ENCODE measurements at regions of chr11 and their contacts with region 1.

Region 1: DNA sequence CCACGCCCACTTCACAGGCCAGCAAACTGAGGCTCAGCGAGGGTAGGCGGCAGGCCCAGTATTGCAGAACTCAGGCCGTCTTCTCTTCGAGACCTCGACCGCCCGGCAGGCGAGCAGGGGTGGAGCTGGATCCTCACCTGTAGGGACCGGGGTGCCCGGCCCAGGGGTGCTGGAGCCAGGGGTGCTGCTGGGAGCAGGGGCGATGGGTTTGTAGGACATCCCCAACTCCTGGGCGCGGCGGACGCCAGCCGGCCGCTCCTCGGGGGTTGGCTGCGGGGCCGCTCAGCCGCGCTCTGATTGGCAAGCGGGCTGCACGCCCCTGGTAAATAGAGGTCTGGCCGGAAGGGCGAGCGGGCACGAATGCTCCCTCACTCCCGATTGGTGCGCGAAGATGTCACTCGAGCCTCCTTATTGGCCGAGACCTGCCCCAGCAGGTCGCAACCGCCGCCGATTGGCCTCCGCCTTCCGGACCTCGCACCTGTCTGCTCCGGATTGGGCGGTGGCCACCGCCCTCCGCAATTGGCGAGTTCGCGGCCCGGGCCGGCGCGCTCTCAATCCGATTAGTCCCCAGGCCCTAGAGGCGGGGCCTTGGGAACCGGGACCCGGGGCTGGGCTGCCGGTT is at the start of gene CDK2AP2:
- DNase-seq: peak; percentile 99
- H3K4me3 ChIP-seq: peak within 1 kb of the TSS; percentile 49 to 83 (median 69)
- H3K4me3 Mint-ChIP-seq: peak within 1 kb of the TSS; percentile 78 to 87
- H3K27ac ChIP-seq: peak within 1 kb of the TSS; percentile 82 to 93
- H3K27ac Mint-ChIP-seq: peak within 1 kb of the TSS; percentile 88 to 98 (median 95)
- H3K4me1 ChIP-seq: peaks cover 46 to 53% of the 10 kb centered on the region in 2 donors
- H3K4me1 Mint-ChIP-seq: peaks cover 30% of the 10 kb centered on the region
- H3K27me3 ChIP-seq: peaks cover 0 to 13% of the 10 kb centered on the region in 2 donors
- H3K27me3 Mint-ChIP-seq: peaks cover 5 to 17% (median 11%) of the 10 kb centered on the region in 3 donors
- CTCF ChIP-seq: no peak
- polyA plus RNA-seq, gene CDK2AP2: 47.8 to 80.2 (median 78.5) TPM

Region 2: DNA sequence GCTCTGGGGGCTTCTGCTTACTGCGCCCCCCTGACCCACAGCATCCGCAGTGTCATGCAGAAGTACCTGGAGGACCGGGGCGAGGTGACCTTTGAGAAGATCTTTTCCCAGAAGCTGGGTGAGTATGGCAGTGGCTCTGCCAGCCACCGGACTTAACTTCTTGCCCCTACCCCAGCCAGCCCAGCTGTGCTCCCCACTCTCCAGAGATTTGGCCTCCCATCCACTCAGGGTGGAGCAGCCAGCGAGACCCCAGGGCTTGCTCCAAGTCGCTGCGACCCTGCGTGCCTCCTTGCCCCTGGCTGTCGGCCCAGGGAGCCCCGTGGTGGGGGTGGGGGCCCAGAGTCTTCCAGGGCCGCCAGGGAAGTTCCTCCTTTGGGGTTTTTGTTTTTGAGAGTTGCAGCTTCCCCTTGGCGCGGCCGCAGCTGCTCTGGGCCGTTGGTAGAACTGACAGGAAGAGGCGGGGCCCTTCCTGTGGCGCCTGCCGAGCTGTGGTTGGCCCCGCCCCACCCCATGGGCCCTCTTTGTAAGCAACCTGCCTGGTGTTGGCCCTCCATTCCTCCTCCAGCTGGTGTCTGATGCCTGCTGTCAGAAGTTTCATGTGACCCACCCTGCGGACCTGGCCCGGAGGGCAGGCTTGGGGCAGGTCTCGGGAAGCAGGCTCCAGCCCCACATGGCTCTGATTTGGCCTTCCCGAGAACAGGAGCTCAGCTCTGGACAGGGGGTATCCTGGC is 230.6 kb before region 1 on chr11:
- intact Hi-C with region 1: loop called in 1 of 2 experiments (anchors 10 kb)
- DNase-seq: peak; percentile 96 to 98 (median 96)
- H3K4me3 ChIP-seq: peak overlapping the region; percentile 3 to 97 (median 23)
- H3K4me3 Mint-ChIP-seq: peak overlapping the region; percentile 73 to 84
- H3K27ac ChIP-seq: peak overlapping the region; percentile 92 to 99
- H3K27ac Mint-ChIP-seq: peak overlapping the region; percentile 93 to 98 (median 97)
- H3K4me1 ChIP-seq: peaks cover 100% of the 10 kb centered on the region in 2 donors
- H3K4me1 Mint-ChIP-seq: peaks cover 98% of the 10 kb centered on the region
- H3K27me3 ChIP-seq: no peaks in the 10 kb centered on the region
- H3K27me3 Mint-ChIP-seq: peaks cover 0 to 6% (median 4%) of the 10 kb centered on the region in 3 donors
- CTCF ChIP-seq: no peak

Region 3: DNA sequence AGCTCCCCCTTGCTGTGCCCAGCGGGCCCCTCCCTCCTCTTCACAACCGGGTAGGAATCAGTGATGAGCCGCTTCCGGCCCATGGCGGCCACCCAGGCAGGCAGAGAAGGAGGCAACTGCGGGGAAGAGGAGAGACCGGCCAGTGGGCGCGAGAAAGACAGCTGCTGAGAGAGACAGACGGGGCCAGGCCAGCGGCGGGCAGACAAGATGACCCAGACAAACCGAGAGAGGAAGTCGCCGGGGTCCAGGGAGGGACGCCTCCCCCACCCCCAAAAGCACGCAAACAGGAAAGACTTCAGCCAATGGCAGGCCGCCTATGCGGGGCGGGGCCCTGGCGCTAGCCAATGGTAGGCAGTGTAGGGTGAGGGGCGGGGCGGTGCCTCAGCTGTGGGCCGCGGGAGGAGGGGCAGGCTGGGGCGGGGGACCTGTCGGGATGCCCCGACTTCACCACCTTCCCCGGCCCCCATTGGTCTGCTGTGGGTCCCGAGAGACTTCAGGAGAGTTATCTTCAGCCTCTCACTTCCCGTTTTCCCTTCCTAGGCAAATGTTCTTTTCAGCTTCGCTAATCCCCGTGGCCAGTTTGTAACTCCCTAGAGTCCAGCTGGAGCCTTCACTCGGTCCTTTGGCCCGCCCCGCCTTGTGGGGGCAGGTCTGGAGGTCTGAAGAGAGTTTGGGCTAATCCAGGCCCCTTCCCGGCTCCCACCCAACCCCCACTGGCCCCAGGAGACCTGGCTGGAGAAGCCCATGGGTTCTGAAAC is 154.5 kb before region 1 on chr11 and contains the start of gene POLD4:
- intact Hi-C with region 1: loop called (anchors 2 to 5 kb)
- DNase-seq: peak; percentile 97 to 99 (median 99)
- H3K4me3 ChIP-seq: peak within 1 kb of the TSS; percentile 52 to 85 (median 73)
- H3K4me3 Mint-ChIP-seq: peak within 1 kb of the TSS; percentile 87 to 96
- H3K27ac ChIP-seq: peak within 1 kb of the TSS; percentile 96 to 99
- H3K27ac Mint-ChIP-seq: peak within 1 kb of the TSS; percentile 97 to 100 (median 99)
- H3K4me1 ChIP-seq: peaks cover 73 to 76% of the 10 kb centered on the region in 2 donors
- H3K4me1 Mint-ChIP-seq: peaks cover 71% of the 10 kb centered on the region
- H3K27me3 ChIP-seq: no peaks in the 10 kb centered on the region
- H3K27me3 Mint-ChIP-seq: peaks cover 0 to 3% (median 2%) of the 10 kb centered on the region in 3 donors
- CTCF ChIP-seq: no peak
- polyA plus RNA-seq, gene POLD4: 157 to 205 (median 176) TPM

Region 4: DNA sequence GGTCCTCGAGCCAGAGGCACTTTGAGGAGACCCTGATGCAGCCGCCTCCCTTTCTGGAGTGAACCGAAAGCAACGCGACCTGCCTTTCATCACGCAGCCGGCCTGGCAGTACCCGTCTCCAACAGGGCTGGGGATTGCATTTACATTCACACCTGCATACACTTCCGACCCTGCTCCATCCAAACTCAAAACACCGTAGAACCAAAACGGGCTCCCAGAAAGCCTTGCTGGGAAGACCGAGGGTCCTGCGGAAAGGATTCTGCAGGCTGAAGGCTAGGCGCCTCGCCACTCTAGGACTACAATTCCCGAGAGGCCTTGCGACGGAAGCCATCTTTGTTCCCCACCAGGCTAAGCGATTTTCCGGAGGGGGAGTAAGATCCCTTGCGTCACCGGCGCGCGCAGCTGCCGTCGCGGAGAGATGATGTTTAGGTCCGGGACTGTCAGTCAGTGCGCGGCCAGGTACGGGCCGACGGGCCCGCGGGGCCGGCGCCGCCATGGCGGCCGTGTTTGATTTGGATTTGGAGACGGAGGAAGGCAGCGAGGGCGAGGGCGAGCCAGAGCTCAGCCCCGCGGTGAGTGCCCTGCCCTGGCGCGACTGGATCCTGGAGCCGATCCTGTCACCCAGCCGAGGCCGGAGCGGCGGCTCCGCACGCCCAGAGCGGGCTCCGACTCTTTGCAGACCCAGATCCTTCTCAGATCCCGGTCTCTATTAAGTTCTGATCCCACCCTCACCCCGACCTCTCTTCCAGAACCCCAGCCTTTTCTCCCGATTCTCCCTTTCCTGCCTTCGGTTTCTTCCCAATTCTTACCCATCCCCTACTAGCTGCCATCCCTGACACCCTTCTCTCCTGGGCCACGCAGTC is 79.7 kb before region 1 on chr11 and contains the start of gene RPS6KB2:
- intact Hi-C with region 1: loop called in 1 of 2 experiments (anchors 5 kb)
- DNase-seq: peak; percentile 96 to 97 (median 96)
- H3K4me3 ChIP-seq: peak within 1 kb of the TSS; percentile 79 to 93 (median 91)
- H3K4me3 Mint-ChIP-seq: peak within 1 kb of the TSS; percentile 99 to 100
- H3K27ac ChIP-seq: peak within 1 kb of the TSS; percentile 66 to 88
- H3K27ac Mint-ChIP-seq: peak within 1 kb of the TSS; percentile 92 to 97 (median 93)
- H3K4me1 ChIP-seq: peaks cover 16 to 20% of the 10 kb centered on the region in 2 donors
- H3K4me1 Mint-ChIP-seq: peaks cover 16% of the 10 kb centered on the region
- H3K27me3 ChIP-seq: no peaks in the 10 kb centered on the region
- H3K27me3 Mint-ChIP-seq: peaks cover 0 to 3% (median 1%) of the 10 kb centered on the region in 3 donors
- CTCF ChIP-seq: no peak
- polyA plus RNA-seq, gene RPS6KB2: 51.6 to 101 (median 53.8) TPM

Region 5: DNA sequence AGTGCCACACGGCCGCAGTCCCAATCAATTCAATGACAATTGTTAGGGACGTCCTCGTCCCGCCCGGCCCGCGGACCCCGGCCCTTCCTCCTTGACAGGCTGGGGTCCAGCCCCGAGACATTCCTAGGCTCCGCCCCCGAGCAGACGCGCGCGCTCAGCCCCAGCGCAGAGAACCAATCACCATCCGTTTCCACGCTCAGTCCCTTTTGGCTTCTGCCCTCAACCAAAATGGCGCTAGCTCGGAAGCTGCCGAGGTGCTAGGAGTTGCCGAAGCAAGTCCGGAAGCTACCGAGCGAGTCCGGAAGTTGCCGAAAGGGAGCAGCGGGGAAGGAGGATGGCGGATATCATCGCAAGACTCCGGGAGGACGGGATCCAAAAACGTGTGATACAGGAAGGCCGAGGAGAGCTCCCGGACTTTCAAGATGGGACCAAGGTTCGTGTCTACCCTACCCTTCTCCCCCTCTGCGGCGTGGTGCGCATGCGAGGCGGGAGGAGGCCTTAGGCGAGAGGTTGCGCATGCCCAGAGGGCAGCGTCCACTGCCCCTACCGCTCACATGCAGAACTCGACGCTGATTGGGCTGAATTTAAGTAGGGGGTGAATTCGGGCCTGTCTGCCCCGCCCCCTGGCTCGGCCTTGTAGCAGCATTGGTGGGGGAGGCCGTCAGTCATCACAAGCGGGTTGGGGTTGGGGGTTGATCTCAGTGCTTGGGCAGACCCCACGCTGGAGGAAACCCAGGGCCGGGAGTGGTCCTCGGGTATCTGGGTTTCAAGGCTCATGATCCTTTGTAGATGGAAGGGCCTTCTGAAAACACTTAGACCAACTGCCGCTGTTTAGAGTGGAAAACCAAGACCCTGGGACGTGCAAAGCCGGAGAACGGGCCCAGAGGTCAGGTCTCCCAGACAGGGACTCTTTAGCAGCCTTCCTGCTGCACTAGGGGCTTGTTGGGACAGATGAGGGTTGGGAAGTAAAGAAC is 24.9 kb before region 1 on chr11 and contains the start of gene AIP:
- intact Hi-C with region 1: loop called in 1 of 2 experiments (anchors 1 kb)
- DNase-seq: peak; percentile 98
- H3K4me3 ChIP-seq: peak within 1 kb of the TSS; percentile 28 to 80 (median 34)
- H3K4me3 Mint-ChIP-seq: peak within 1 kb of the TSS; percentile 88 to 94
- H3K27ac ChIP-seq: peak within 1 kb of the TSS; percentile 83 to 93
- H3K27ac Mint-ChIP-seq: peak within 1 kb of the TSS; percentile 94 to 99 (median 97)
- H3K4me1 ChIP-seq: peaks cover 44 to 48% of the 10 kb centered on the region in 2 donors
- H3K4me1 Mint-ChIP-seq: peaks cover 40% of the 10 kb centered on the region
- H3K27me3 ChIP-seq: no peaks in the 10 kb centered on the region
- H3K27me3 Mint-ChIP-seq: peaks cover 2 to 8% (median 2%) of the 10 kb centered on the region in 3 donors
- CTCF ChIP-seq: no peak
- polyA plus RNA-seq, gene AIP: 76.7 to 132 (median 99.3) TPM